A673 (cell line): ENCODE measurements at regions of chr9 and their contacts with region 1.

Region 1: DNA sequence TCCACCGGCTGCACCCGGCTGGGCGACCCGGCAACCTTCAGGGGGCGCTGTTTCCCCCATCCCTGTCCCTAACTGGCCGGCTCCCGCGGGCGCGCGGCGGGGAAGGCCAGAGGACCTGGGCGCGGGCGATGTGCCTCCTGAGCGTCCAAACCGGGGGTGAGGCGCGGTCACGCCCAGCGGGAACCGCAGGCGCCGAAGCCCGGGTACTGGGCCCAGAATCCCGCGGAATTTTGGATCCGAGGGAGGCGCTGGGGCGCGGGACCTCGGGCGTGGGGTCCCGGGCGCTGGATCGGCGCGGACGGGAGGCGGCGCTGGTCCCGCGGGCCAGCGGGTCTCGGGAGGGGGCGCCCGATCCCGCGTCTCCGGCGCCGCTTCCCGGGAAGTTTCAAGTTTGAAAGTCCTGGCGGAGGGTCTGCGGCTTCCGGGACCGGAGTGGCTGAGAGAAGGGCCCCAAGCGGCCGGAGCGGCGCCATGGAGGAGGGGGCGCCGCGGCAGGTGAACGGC is at the start of gene PKN3:
- DNase-seq: peak; percentile 92
- H3K4me3 ChIP-seq: peak within 1 kb of the TSS; percentile 82
- H3K27ac ChIP-seq: peak within 1 kb of the TSS; percentile 76
- H3K4me1 ChIP-seq: peaks cover 5% of the 10 kb centered on the region
- H3K27me3 ChIP-seq: no peaks in the 10 kb centered on the region
- CTCF ChIP-seq: peak; percentile 93
- total RNA-seq, gene PKN3: 12.3 and 21.5 TPM in 2 replicates

Region 2: DNA sequence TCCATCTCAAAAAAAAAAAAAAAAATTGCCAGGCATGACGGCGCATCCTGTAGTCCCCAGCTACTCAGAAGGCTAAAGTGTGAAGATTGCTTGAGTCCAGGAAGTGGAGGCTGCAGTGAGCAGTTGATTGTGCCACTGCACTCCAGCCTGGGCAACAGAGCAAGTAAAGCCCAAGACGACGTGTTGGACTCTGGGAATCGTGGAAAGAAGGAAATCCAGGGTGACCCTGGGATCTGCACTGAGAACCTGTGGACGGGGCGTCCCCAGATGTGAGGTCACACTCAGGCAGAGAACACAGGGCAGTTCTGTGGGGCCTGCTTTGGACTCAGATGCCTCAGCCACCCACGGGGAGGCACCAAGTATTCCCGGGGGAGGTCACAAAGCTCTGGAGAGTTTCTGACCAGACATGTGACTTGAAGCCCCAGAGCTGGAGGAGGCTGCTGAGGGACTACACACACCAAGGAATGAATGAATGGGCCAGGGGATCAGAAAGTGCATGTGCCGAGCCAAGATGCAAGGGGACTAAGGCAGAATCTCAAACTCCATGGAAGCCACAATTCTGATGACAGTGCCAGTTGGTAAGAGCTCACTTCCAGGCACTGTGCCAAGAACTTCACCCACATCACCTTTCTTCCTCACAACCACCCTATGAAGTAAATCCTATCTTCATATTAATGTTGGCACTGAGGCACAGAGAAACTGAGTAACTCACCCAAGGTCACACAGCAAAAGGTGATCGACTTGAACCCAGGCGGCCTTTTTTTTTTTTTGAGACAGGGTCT is 58.8 kb before region 1 on chr9:
- CTCF ChIA-PET with region 1: no interaction called
- POLR2A ChIA-PET with region 1: no interaction called
- intact Hi-C with region 1: loop called (anchors 5 kb)
- DNase-seq: no peak
- H3K4me3 ChIP-seq: no peak overlapping the region
- H3K27ac ChIP-seq: no peak overlapping the region
- H3K4me1 ChIP-seq: peaks cover 5% of the 10 kb centered on the region
- H3K27me3 ChIP-seq: no peaks in the 10 kb centered on the region
- CTCF ChIP-seq: no peak